MCF 10A (cell line): ENCODE measurements at regions of chr7 and their contacts with region 1.

Region 1: DNA sequence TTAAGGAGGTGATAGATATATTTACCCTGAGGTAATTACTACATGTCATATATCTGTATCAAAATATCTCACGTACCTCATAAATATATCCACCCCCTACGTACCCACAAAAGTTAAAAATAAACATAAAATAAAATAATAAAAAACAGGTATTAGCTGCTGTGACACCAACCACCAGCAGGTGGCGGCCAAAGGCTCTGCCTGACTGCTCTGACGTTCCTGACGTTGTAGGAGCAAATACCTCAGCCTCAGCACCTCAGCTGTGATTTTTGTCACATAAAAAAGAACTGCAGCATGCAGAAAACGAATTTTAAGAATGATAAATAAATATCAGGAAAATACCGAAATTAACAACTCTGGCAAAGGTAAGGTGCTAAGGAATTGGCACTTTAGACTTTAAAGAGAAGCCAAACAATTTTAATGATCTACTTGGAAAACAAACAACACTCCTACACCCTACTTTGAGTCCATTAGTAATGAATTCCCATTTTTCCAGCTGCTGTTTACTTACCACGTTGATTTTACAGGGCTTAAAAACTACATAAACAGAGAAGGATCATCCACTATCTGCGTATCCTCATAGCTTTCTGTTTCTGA is 125.4 kb upstream of the TARP start:
- DNase-seq: peak; percentile 52
- H3K4me3 Mint-ChIP-seq: no peak overlapping the region
- H3K27ac Mint-ChIP-seq: no peak overlapping the region
- H3K4me1 Mint-ChIP-seq: no peaks in the 10 kb centered on the region
- H3K27me3 Mint-ChIP-seq: peaks cover 43% of the 10 kb centered on the region
- CTCF ChIP-seq: peak; percentile 75

Region 2: GRCh38 chr7:38382684-38383083 is 16.1 kb before region 1 on chr7:
- CTCF ChIA-PET with region 1: interaction called, 10 read pairs
- POLR2A ChIA-PET with region 1: no interaction called
- intact Hi-C with region 1: no loop called
- DNase-seq: peak; percentile 62
- H3K4me3 Mint-ChIP-seq: no peak overlapping the region
- H3K27ac Mint-ChIP-seq: no peak overlapping the region
- H3K4me1 Mint-ChIP-seq: peaks cover 11% of the 10 kb centered on the region
- H3K27me3 Mint-ChIP-seq: peaks cover 7% of the 10 kb centered on the region
- CTCF ChIP-seq: no peak

Region 3: DNA sequence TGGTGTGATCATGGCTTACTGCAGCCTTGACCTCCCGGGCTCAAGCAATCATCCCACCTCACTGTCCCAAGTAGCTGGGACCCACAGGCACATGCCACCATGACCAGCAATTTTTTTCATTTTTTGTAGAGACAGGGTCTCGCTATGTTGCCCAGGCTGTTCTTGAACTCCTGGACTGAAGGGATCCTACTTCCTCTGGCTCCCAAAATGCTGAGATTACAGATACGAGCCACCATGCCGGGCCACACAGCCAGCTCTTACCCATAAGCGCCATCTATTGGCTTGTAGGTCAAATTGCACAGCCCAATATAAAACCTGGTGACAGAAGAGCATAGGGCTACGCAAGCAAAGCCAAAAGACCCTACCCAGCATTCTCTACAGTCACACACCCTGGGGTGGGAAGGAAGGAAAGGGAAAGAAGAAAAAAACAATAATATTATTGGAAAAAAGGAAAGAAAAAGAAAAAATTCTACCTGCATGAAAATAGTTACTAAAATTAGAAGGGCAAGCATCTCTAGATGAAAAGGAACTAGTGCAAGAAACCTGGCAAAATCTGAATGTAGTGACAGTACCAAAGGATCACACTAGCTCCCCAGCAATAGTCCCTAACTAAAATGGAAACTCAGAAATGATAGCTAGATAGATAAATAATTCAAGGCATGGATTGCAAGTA is 261.7 kb after region 1 on chr7:
- CTCF ChIA-PET with region 1: interaction called, 16 read pairs
- POLR2A ChIA-PET with region 1: no interaction called
- intact Hi-C with region 1: loop called (anchors 1 kb)
- DNase-seq: peak; percentile 62
- H3K4me3 Mint-ChIP-seq: no peak overlapping the region
- H3K27ac Mint-ChIP-seq: no peak overlapping the region
- H3K4me1 Mint-ChIP-seq: no peaks in the 10 kb centered on the region
- H3K27me3 Mint-ChIP-seq: peaks cover 13% of the 10 kb centered on the region
- CTCF ChIP-seq: peak; percentile 55

Region 4: DNA sequence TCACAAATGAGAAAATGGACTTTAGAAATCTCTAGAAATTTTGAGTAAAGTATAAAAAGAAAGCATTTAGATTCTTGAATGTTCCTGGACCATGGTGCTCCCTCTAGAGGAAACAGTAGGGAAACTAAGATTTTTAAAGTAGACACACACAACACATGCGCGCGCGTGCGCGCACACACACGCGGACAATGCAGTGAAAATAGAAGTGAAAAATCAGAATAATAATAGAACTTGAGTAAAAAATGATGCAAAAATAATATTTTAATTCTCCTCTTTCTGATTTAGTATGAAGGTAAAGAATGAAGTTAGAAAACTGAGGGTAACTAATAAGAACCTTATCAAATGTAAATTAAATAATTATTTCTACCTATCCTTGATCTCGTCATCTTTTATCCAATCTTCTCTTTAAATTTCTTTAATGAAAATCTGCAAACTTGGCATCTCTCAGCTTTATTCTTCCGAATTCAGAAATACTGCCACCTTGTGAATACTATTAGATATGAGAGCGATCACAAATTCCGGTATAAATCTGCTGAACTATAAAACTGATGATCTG is 349.3 kb after region 1 on chr7:
- CTCF ChIA-PET with region 1: interaction called, 12 read pairs
- POLR2A ChIA-PET with region 1: interaction called, 3 read pairs
- intact Hi-C with region 1: loop called (anchors 1 kb)
- DNase-seq: peak; percentile 31
- H3K4me3 Mint-ChIP-seq: no peak overlapping the region
- H3K27ac Mint-ChIP-seq: no peak overlapping the region
- H3K4me1 Mint-ChIP-seq: peaks cover 19% of the 10 kb centered on the region
- H3K27me3 Mint-ChIP-seq: no peaks in the 10 kb centered on the region
- CTCF ChIP-seq: peak; percentile 17

Region 5: GRCh38 chr7:39510864-39511354 is 1112.1 kb after region 1 on chr7:
- CTCF ChIA-PET with region 1: interaction called, 3 read pairs
- POLR2A ChIA-PET with region 1: no interaction called
- intact Hi-C with region 1: loop called (anchors 10 kb)
- DNase-seq: no peak
- H3K4me3 Mint-ChIP-seq: no peak overlapping the region
- H3K27ac Mint-ChIP-seq: no peak overlapping the region
- H3K4me1 Mint-ChIP-seq: no peaks in the 10 kb centered on the region
- H3K27me3 Mint-ChIP-seq: peaks cover 22% of the 10 kb centered on the region
- CTCF ChIP-seq: no peak